ENCODE measurements at regions of chr10 and their contacts with region 1.

Region 1: DNA sequence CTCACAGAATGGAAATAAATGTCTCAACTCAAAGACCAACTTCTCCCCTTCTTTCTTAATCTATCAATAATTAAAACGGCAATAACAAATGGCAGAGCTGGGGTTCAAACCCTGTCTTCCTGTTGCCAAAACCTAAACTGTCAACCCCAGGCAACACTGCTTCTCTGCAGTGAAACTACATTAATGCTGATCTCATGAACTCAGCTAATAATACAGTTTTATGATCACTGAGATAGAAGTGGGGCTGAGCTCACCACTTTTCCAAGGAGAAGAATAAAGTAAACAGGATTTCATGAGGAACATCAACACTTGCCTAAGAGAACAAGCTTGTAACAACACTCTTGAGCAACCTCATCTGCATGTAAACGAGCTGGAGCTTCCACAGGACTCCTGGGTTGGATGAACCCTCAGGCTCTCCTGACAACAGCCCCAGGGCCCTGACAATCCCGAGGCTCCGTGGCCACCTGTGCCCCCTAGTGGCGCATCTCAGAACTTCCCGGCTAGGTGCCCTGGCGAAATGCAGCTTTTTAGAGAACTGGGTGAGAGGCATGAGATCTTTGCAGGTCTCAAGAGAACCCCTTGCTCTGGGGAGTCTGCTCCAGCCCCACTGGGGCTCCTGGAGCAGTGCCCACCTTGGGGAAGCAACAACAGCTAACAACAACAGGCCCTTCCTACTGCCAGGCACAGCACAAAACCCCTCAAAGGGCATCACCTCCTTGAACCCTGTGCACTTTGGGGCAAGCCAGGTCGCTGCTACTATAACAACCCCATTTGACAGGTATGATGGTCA is 169.3 kb downstream of the SH3PXD2A start:
- DNase-seq: peak; percentile 71 to 79 (median 74)
- ATAC-seq: peak; percentile 85
- H3K4me3 ChIP-seq: no peak overlapping the region
- H3K27ac ChIP-seq: no peak overlapping the region
- H3K4me1 ChIP-seq: no peaks in the 10 kb centered on the region
- H3K27me3 ChIP-seq: no peaks in the 10 kb centered on the region
- CTCF ChIP-seq: peak; percentile 82 to 95 (median 87)
- POLR2A ChIP-seq: no peak

Region 2: DNA sequence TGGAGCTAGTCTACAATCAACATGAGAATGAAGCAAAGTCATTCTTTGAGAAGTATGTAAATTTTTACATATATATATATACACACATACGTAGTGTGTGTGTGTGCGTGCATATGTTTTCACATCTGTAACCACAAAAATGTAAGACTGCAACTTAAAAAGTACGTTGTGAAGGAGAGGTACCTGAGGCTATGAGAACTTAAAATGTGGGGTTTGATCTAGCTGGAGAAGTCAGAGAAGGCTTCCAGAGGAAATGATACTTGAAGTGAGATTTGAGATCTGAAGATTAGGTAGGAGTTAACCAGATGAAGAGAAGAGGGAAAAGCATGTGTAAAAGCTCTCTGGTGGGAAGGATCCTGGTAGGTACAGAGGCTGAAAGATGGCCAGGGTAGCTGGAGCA is 312.5 kb before region 1 on chr10:
- intact Hi-C with region 1: no loop called
- DNase-seq: no peak
- ATAC-seq: no peak
- H3K4me3 ChIP-seq: no peak overlapping the region
- H3K27ac ChIP-seq: no peak overlapping the region
- H3K4me1 ChIP-seq: peaks cover 23% of the 10 kb centered on the region
- H3K27me3 ChIP-seq: no peaks in the 10 kb centered on the region
- CTCF ChIP-seq: no peak
- POLR2A ChIP-seq: no peak

Region 3: DNA sequence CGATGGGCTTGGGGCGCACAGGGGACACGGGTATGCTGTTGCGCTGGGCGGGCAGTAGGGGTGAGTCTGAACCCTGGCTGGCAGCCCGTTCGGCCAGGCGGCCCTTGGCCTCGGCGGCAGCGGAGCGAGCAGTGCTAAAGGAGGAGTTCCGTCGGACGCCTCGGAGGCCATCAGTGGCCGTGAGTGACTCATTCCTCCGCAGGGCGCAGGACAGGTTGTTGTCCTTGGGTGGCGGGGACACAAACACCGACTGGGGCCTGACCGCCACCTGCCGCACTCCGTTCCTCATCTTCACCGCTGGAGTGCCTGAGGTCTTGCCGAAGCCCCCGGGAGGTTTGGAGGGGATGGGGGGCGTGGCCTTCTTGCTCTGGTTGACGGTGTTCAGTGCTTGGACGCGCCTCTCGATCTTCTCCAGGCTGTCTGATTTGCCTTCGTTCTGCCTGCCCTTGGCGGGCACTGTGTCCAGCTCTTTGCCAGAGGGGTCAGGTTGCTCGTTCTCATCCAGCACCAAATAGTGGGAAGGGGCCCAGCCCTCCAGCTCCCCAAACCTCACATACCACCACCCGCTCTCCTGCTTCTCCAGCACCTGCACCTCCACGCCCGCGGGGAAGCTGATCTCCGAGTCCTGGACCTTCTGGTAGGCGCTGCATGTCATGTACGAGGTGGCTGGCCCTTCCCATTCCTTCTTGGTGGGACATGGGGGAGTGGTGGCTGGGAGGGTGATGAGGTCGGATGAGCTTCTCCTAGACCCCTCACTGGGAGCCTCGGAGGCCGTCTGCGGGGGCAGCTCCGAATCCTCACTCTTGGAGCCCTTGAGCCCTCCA is 83.8 kb before region 1 on chr10:
- intact Hi-C with region 1: loop called (anchors 5 kb)
- DNase-seq: no peak
- ATAC-seq: no peak
- H3K4me3 ChIP-seq: no peak overlapping the region
- H3K27ac ChIP-seq: no peak overlapping the region
- H3K4me1 ChIP-seq: peaks cover 5% of the 10 kb centered on the region
- H3K27me3 ChIP-seq: no peaks in the 10 kb centered on the region
- CTCF ChIP-seq: no peak
- POLR2A ChIP-seq: no peak

Measured in body of pancreas (tissue), 4 donors.